ENCODE measurements at regions of chr5 and their contacts with region 1.

Region 1: DNA sequence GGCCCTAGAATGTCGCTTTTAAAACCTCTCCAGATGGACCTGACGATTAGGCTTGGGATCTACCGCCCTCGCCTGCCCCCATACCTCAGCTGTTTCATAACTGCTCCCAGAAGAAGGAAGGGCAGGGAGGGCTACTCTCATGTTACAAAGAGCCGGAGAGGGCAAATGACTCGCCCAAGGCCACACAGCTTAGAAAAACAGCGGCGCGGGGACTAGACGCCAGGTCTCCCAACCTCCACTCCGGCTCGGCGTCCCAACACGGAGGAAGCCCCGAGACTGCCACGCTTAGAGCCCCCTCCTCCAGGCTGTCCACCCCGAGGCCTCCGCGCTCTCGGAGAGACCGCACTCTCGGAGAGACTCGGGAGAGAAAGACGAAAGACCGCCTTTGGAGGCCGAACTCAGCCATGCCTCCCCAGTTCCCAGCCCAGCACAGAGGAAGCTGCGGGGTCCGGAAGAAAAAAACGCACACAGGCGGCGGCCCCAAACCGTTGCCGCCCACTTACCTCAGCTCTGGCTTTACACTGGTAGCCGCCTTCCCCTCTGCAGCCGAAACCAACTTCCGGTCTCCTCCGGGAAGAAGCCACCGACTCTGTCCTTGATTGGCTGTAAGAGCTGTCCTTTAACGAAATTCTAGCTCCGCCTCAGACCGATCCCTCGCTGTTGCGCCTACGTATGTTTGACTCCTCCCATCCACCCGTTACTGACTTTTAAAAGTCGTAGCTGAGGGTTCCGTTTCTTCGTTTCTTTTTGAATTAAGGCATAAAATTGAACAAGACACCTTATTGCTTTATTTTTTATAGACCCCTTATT is at the start of gene MED7:
- DNase-seq: peak; percentile 98
- ATAC-seq: peak; percentile 96
- H3K4me3 ChIP-seq: peak within 1 kb of the TSS; percentile 76 to 99 (median 97)
- H3K4me3 Mint-ChIP-seq: peak within 1 kb of the TSS; percentile 99
- H3K27ac ChIP-seq: peak within 1 kb of the TSS; percentile 95 to 96
- H3K27ac Mint-ChIP-seq: peak within 1 kb of the TSS; percentile 99
- H3K4me1 ChIP-seq: peaks cover 15 to 18% of the 10 kb centered on the region in 2 donors
- H3K4me1 Mint-ChIP-seq: peaks cover 28% of the 10 kb centered on the region
- H3K27me3 ChIP-seq: no peaks in the 10 kb centered on the region
- H3K27me3 Mint-ChIP-seq: no peaks in the 10 kb centered on the region
- CTCF ChIP-seq: no peak
- total RNA-seq, gene MED7: 19.3 and 21.4 TPM in 2 replicates

Region 2: GRCh38 chr5:156402387-156402921 is 740.1 kb before region 1 on chr5:
- CTCF ChIA-PET with region 1: no interaction called
- POLR2A ChIA-PET with region 1: no interaction called
- intact Hi-C with region 1: loop called (anchors 10 kb)
- DNase-seq: peak; percentile 89
- ATAC-seq: peak; percentile 85
- H3K4me3 ChIP-seq: peak overlapping the region in 2 of 5 experiments; percentile 30 to 47
- H3K4me3 Mint-ChIP-seq: peak overlapping the region; percentile 76
- H3K27ac ChIP-seq: peak overlapping the region; percentile 56 to 61
- H3K27ac Mint-ChIP-seq: peak overlapping the region; percentile 82
- H3K4me1 ChIP-seq: peaks cover 10 to 17% of the 10 kb centered on the region in 2 donors
- H3K4me1 Mint-ChIP-seq: peaks cover 15% of the 10 kb centered on the region
- H3K27me3 ChIP-seq: no peaks in the 10 kb centered on the region
- H3K27me3 Mint-ChIP-seq: no peaks in the 10 kb centered on the region
- CTCF ChIP-seq: no peak

Region 3: GRCh38 chr5:157059093-157059539 is 83.4 kb before region 1 on chr5 and contains the start of gene HAVCR1:
- CTCF ChIA-PET with region 1: no interaction called
- POLR2A ChIA-PET with region 1: no interaction called
- intact Hi-C with region 1: no loop called
- DNase-seq: no peak
- ATAC-seq: no peak
- H3K4me3 ChIP-seq: no peak within 1 kb of the TSS
- H3K4me3 Mint-ChIP-seq: no peak within 1 kb of the TSS
- H3K27ac ChIP-seq: no peak within 1 kb of the TSS
- H3K27ac Mint-ChIP-seq: no peak within 1 kb of the TSS
- H3K4me1 ChIP-seq: no peaks in the 10 kb centered on the region
- H3K4me1 Mint-ChIP-seq: no peaks in the 10 kb centered on the region
- H3K27me3 ChIP-seq: no peaks in the 10 kb centered on the region
- H3K27me3 Mint-ChIP-seq: peaks cover 6% of the 10 kb centered on the region
- CTCF ChIP-seq: no peak
- total RNA-seq, gene HAVCR1: 0.22 TPM in 1 of 2 replicates, not detected in the other

Region 4: GRCh38 chr5:157100140-157100679 is 42.3 kb before region 1 on chr5:
- CTCF ChIA-PET with region 1: no interaction called
- POLR2A ChIA-PET with region 1: interaction called, 12 read pairs
- intact Hi-C with region 1: no loop called
- DNase-seq: no peak
- ATAC-seq: no peak
- H3K4me3 ChIP-seq: no peak overlapping the region
- H3K4me3 Mint-ChIP-seq: no peak overlapping the region
- H3K27ac ChIP-seq: no peak overlapping the region
- H3K27ac Mint-ChIP-seq: no peak overlapping the region
- H3K4me1 ChIP-seq: no peaks in the 10 kb centered on the region
- H3K4me1 Mint-ChIP-seq: peaks cover 3% of the 10 kb centered on the region
- H3K27me3 ChIP-seq: no peaks in the 10 kb centered on the region
- H3K27me3 Mint-ChIP-seq: no peaks in the 10 kb centered on the region
- CTCF ChIP-seq: no peak

Region 5: DNA sequence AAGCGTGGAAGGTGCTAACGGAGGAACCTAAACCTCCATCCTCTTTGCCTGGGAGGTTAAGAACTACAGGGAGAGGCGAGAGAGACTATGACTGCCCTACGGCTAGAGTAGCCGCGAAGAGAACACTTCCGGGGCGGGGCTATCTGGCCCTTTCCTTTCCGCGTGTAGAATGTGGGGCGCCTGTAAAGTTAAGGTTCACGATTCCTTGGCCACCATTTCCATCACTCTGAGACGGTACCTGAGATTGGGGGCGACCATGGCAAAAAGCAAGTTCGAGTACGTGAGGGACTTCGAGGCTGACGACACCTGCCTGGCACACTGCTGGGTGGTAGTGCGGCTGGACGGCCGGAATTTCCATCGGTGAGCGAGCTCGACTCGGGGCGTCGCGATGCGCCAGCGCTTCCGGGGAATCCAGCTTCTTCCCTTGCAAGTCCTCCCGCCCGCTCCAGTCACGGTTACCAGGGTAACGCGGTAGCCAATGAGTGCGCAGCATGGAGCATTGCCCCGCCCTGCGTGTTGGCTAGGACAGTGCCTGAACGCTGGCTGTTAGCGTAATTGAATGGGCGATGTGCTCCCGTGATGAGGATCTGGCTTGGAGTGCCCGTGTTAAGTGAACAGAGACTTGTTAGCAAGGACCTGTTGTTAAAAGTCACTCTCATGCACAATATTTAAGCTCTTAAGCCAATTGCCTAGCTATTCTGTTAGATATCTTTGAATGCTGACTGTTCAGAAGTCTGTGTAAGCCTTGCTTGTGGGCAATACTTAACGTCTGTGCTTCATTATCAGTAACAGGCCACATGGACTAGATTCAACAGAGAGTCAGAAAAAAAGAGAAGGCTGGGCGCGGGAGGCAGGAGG is 589.0 kb after region 1 on chr5 and contains the start of gene THG1L:
- CTCF ChIA-PET with region 1: no interaction called
- POLR2A ChIA-PET with region 1: no interaction called
- intact Hi-C with region 1: loop called (anchors 1 kb)
- DNase-seq: peak; percentile 93
- ATAC-seq: peak; percentile 84
- H3K4me3 ChIP-seq: peak within 1 kb of the TSS; percentile 67 to 94 (median 93)
- H3K4me3 Mint-ChIP-seq: peak within 1 kb of the TSS; percentile 98
- H3K27ac ChIP-seq: peak within 1 kb of the TSS; percentile 92 to 94
- H3K27ac Mint-ChIP-seq: peak within 1 kb of the TSS; percentile 99
- H3K4me1 ChIP-seq: peaks cover 21 to 26% of the 10 kb centered on the region in 2 donors
- H3K4me1 Mint-ChIP-seq: peaks cover 30% of the 10 kb centered on the region
- H3K27me3 ChIP-seq: no peaks in the 10 kb centered on the region
- H3K27me3 Mint-ChIP-seq: no peaks in the 10 kb centered on the region
- CTCF ChIP-seq: no peak
- total RNA-seq, gene THG1L: 14.1 and 14.6 TPM in 2 replicates